Activated CD4-positive, alpha-beta memory T cell treated with anti-CD3 and anti-CD28 coated beads for 36 hours (primary cell): ENCODE measurements at regions of chrX and their contacts with region 1.

Region 1: DNA sequence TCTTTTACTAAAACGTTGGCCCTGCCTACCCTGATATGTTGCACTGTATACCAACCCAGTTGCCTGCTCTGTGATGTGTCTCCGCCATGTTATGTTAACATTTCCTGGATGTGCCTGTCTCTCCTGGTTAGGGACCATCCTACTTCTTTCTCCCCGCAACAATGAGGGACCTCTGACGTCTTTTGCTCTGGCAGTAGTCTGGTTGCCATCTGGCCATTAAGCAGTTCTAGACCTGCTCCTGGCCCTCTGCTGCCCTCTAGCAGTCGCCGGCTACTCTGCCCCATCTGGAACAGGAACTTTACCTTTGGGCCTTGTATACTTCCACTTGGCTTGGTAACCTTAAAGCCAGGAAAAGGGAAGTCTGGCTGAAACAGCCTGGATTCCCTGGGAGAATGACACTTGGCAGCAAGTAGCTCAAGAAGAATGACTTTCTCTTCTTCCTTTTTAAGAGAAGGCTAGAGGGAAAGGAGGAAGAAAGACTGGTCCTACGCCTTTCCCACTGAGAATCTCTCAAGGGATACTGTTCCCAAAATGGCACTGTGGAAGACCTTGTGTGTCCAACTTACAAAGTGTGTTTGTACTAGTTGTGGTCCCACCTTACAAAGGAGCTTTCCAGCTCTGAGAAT is 63.5 kb downstream of the GPC3 start:
- DNase-seq: peak; percentile 52
- H3K4me3 Mint-ChIP-seq: no peak overlapping the region
- H3K27ac Mint-ChIP-seq: no peak overlapping the region
- H3K4me1 Mint-ChIP-seq: peaks cover 17% of the 10 kb centered on the region
- H3K27me3 Mint-ChIP-seq: no peaks in the 10 kb centered on the region

Region 2: DNA sequence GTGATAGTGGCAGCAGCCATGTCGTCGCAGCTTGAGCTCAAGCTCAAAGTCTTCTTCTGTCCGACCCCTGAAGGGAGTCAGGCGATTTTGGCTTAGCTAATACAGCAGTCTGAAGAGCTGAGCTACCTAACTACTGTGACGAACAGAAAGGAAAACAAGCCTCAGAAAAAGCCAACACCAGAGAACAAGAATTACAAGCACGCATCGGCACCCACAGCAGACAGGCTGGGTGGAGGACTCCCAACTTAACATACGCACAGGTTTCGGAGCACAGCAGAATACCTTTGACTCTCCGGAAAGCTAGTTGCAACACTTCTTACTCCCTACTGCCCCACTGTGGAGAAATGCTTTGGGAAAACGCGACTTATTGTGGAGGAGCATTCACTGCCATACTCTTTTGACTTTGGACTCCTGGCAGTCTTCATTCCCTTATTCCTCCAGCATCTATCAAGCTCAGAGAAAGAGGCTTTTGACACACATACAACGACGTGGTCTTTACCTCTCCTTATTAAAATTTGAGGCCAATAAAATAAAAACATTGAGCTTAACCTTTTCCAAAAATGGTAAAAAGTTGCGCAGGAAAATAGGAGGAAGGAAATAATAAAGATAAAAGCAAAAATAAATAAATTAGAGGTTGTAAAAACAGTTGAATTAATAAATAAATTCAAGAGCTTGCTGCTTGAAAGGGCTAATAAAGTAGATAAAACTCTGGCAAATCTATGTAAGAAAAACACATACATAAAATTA is 104.9 kb after region 1 on chrX:
- CTCF ChIA-PET with region 1: interaction called, 4 read pairs
- POLR2A ChIA-PET with region 1: no interaction called
- intact Hi-C with region 1: loop called (anchors 10 kb)
- DNase-seq: peak; percentile 26
- H3K4me3 Mint-ChIP-seq: no peak overlapping the region
- H3K27ac Mint-ChIP-seq: no peak overlapping the region
- H3K4me1 Mint-ChIP-seq: no peaks in the 10 kb centered on the region
- H3K27me3 Mint-ChIP-seq: no peaks in the 10 kb centered on the region

Region 3: DNA sequence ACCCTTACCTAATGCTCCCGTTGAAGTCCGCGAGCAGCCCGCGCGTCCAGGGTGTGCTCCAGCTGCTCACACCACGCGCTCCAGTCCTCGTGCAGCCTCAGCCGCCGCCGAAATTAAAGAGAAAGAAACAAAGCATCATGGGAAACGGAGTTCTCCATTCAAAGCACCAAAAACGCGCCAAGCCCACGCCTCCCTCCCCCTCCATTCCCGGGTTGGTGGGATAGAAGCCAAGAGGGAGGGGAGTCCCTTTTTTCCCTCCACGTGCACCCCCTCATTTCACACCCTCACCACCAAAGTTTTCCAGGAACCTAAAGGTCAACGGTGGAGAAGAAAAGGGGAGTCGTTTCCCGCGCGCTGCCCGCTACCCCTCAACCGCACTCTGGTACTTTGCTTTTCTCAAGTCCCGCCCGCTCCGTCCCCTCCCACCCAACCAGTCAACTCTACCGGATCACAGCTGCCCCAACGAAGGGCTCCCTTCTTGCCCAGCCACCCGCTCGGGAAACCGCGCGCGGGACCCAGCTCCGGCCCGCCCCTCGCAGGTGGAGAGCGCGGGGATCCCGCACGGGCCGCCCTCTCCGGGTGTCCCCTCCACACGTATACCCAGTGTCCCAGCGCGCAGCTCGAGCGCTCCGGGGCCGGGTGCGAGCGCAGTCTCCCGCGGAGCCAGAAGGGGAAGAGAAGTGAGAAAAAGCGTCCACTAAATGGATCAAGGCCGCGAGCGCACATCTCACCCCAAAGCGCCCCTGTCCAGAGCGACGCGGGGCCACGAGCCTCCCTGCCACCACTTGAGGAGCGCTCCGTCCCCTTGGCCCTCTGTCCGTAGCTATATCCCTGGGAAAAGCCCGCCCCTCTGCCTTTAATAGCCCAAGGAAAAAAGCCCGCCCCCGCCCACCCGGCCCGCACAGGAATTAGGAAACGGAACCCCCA is 250.0 kb after region 1 on chrX:
- CTCF ChIA-PET with region 1: no interaction called
- POLR2A ChIA-PET with region 1: no interaction called
- intact Hi-C with region 1: loop called (anchors 10 kb)
- DNase-seq: peak; percentile 57
- H3K4me3 Mint-ChIP-seq: peak overlapping the region; percentile 78
- H3K27ac Mint-ChIP-seq: no peak overlapping the region
- H3K4me1 Mint-ChIP-seq: peaks cover 15% of the 10 kb centered on the region
- H3K27me3 Mint-ChIP-seq: peaks cover 13% of the 10 kb centered on the region